HepG2 (cell line): ENCODE measurements at regions of chr20 and their contacts with region 1.

Region 1: DNA sequence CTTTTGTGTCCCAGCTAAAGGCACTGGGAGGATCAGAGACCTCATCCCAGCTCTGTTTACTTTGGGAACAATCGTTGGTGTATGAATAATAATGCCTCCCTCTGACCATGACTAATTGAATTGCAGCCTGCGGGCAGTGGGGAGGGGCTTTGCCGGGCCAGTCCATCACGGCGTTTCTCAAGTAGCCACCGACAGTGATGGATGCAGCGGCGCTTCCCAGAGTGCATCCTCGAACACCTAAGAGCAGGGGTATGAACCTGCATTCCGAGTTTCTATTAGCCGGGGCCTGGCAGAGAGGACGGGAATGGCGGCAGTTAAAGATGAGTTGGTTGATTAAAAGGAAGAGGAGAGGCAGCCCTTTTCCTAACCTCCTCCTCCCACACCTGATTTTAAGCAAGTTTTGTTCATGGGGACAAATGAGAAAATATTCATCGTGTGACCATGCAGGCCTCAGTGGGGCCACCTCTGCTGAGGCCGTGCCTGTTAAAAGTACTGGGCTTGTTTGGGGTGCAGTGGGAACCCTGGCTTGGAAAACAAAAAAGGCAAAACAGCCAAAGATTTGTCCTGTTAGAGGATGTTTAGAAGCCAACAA is 154.1 kb downstream of the FOXA2 start:
- DNase-seq: peak; percentile 92
- ATAC-seq: peak; percentile 67
- H3K4me3 ChIP-seq: peak overlapping the region; percentile 45 to 67 (median 67)
- H3K27ac ChIP-seq: peak overlapping the region; percentile 96
- H3K4me1 ChIP-seq: peaks cover 75% of the 10 kb centered on the region
- H3K27me3 ChIP-seq: no peaks in the 10 kb centered on the region; a peak in 1 of 5 replicates
- CTCF ChIP-seq: no peak
- EP300 ChIP-seq: peak; percentile 44 to 54; a peak in 3 of 4 replicates
- POLR2A ChIP-seq: peak; percentile 18 to 69
- RAD21 ChIP-seq: no peak

Region 2: GRCh38 chr20:21424846-21425245 is 1005.4 kb before region 1 on chr20:
- CTCF ChIA-PET with region 1: no interaction called
- POLR2A ChIA-PET with region 1: no interaction called
- in situ Hi-C with region 1: no loop called
- intact Hi-C with region 1: no loop called
- DNase-seq: no peak
- ATAC-seq: no peak
- H3K4me3 ChIP-seq: no peak overlapping the region
- H3K27ac ChIP-seq: no peak overlapping the region
- H3K4me1 ChIP-seq: no peaks in the 10 kb centered on the region
- H3K27me3 ChIP-seq: peaks cover 0 to 2% of the 10 kb centered on the region in 2 experiments; a peak in 1 of 5 replicates
- CTCF ChIP-seq: no peak
- EP300 ChIP-seq: no peak
- POLR2A ChIP-seq: no peak
- RAD21 ChIP-seq: no peak

Region 3: GRCh38 chr20:22182148-22182547 is 248.1 kb before region 1 on chr20:
- CTCF ChIA-PET with region 1: no interaction called
- POLR2A ChIA-PET with region 1: no interaction called
- in situ Hi-C with region 1: no loop called
- intact Hi-C with region 1: no loop called
- DNase-seq: no peak
- ATAC-seq: no peak
- H3K4me3 ChIP-seq: no peak overlapping the region
- H3K27ac ChIP-seq: no peak overlapping the region
- H3K4me1 ChIP-seq: no peaks in the 10 kb centered on the region
- H3K27me3 ChIP-seq: no peaks in the 10 kb centered on the region
- CTCF ChIP-seq: no peak
- EP300 ChIP-seq: no peak
- POLR2A ChIP-seq: no peak
- RAD21 ChIP-seq: no peak

Region 4: DNA sequence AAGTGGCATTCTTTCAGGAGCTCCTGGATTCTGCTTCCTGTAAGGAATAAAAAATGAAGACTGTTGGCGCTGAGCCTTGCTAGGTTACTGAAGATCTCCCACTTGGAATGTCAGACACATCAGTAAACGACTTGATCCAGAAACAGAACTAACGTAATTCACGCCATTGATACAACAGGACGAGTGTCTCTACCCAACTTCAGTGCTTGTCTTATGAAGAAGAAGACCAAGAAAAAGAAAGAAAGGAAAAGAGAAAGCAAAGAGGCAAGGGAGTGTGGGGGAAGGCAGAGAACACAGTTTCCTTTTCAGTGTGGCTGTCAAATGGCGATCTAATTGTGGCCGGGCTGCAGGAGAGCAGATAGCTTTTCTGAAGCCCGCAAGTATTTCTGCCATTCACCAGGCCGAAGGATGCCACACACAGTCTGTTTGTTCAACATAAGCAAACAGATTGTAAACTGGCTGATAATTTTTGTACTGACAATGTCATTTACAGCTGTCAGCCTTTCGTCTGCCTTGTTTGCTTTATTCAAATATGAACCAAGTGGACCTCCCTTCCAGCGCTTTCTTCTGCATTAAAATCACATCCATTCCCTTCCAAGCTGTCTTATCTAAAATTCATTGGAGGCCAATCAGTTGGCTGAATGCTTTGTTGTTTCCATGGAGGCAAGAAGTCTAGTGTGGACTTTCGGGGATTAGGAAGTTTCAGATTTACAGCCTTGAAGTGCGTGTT is 26.5 kb before region 1 on chr20:
- CTCF ChIA-PET with region 1: no interaction called
- POLR2A ChIA-PET with region 1: interaction called, 62 read pairs
- in situ Hi-C with region 1: no loop called
- intact Hi-C with region 1: loop called (anchors 5 kb)
- DNase-seq: peak; percentile 77
- ATAC-seq: peak; percentile 90
- H3K4me3 ChIP-seq: peak overlapping the region; percentile 47 to 69 (median 69)
- H3K27ac ChIP-seq: peak overlapping the region; percentile 17
- H3K4me1 ChIP-seq: peaks cover 47% of the 10 kb centered on the region
- H3K27me3 ChIP-seq: peaks cover 0 to 12% of the 10 kb centered on the region in 2 experiments; a peak in 3 of 5 replicates
- CTCF ChIP-seq: no peak
- EP300 ChIP-seq: 0 out of 4 replicates have a peak, but pooled peaks of 1 of the 2 experiments have one; percentile 33
- POLR2A ChIP-seq: no peak
- RAD21 ChIP-seq: 0 out of 2 replicates have a peak, but pooled peaks have one; percentile 7

Region 5: DNA sequence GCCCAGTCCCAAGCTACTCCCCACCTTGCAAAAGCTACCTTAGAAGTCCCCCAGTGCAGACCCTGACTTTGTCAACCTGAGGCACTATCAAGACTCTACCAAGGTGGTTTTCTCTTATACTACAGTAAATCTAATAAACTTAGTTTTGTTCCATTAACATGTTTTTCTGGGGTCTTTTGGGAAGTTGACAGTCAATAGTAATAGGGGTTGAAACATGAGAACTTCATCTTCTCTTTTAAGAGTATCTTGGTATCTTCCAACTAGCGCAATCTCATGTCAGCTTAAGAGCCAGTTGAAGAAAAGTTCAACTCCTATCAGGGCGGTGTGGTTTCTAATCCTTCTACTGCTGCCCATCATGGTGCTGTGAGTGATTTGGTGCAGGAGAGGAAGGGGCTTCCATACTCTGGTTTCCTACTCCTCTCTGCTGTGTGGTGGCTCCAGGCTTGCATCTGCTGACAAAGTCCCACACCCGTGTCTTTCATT is 10.1 kb before region 1 on chr20:
- CTCF ChIA-PET with region 1: no interaction called
- POLR2A ChIA-PET with region 1: interaction called, 21 read pairs
- in situ Hi-C with region 1: no loop called
- intact Hi-C with region 1: no loop called
- DNase-seq: no peak
- ATAC-seq: no peak
- H3K4me3 ChIP-seq: no peak overlapping the region
- H3K27ac ChIP-seq: no peak overlapping the region
- H3K4me1 ChIP-seq: peaks cover 35% of the 10 kb centered on the region
- H3K27me3 ChIP-seq: no peaks in the 10 kb centered on the region
- CTCF ChIP-seq: no peak
- EP300 ChIP-seq: no peak
- POLR2A ChIP-seq: no peak
- RAD21 ChIP-seq: no peak

Region 6: GRCh38 chr20:22490287-22491193 is 60.3 kb after region 1 on chr20:
- CTCF ChIA-PET with region 1: no interaction called
- POLR2A ChIA-PET with region 1: interaction called, 42 read pairs
- in situ Hi-C with region 1: no loop called
- intact Hi-C with region 1: loop called (anchors 2 kb)
- DNase-seq: peak; percentile 100
- ATAC-seq: peak; percentile 99
- H3K4me3 ChIP-seq: peak overlapping the region; percentile 41 to 61 (median 59)
- H3K27ac ChIP-seq: peak overlapping the region; percentile 84
- H3K4me1 ChIP-seq: peaks cover 47% of the 10 kb centered on the region
- H3K27me3 ChIP-seq: no peaks in the 10 kb centered on the region
- CTCF ChIP-seq: peak; percentile 81
- EP300 ChIP-seq: peak; percentile 81 to 92
- POLR2A ChIP-seq: peak; percentile 58 to 75
- RAD21 ChIP-seq: peak; percentile 79

Region 7: GRCh38 chr20:22546344-22546743 is 116.1 kb after region 1 on chr20:
- CTCF ChIA-PET with region 1: no interaction called
- POLR2A ChIA-PET with region 1: no interaction called
- in situ Hi-C with region 1: no loop called
- intact Hi-C with region 1: no loop called
- DNase-seq: no peak
- ATAC-seq: no peak
- H3K4me3 ChIP-seq: no peak overlapping the region
- H3K27ac ChIP-seq: no peak overlapping the region
- H3K4me1 ChIP-seq: peaks cover 47% of the 10 kb centered on the region
- H3K27me3 ChIP-seq: no peaks in the 10 kb centered on the region; a peak in 1 of 5 replicates
- CTCF ChIP-seq: no peak
- EP300 ChIP-seq: no peak
- POLR2A ChIP-seq: no peak
- RAD21 ChIP-seq: no peak